Motor neuron (in vitro differentiated cells): ENCODE measurements at regions of chr5 and their contacts with region 1.

Region 1: GRCh38 chr5:112276983-112277382 is 142.1 kb downstream of the EPB41L4A start:
- ATAC-seq: peak in 5 of 8 experiments; percentile 54 to 79 (median 69)
- H3K4me3 ChIP-seq: no peak overlapping the region
- H3K27ac ChIP-seq: no peak overlapping the region
- H3K4me1 ChIP-seq: peaks cover 7 to 10% of the 10 kb centered on the region in 2 donors

Region 2: GRCh38 chr5:112004867-112005622 is 271.9 kb before region 1 on chr5:
- in situ Hi-C with region 1: no loop called
- ATAC-seq: peak in 3 of 8 experiments; percentile 60 to 90 (median 89)
- H3K4me3 ChIP-seq: no peak overlapping the region
- H3K27ac ChIP-seq: no peak overlapping the region
- H3K4me1 ChIP-seq: no peaks in the 10 kb centered on the region

Region 3: GRCh38 chr5:112239996-112240395 is 37.0 kb before region 1 on chr5:
- in situ Hi-C with region 1: no loop called
- ATAC-seq: peak in 4 of 8 experiments; percentile 35 to 100 (median 86)
- H3K4me3 ChIP-seq: no peak overlapping the region
- H3K27ac ChIP-seq: no peak overlapping the region
- H3K4me1 ChIP-seq: peaks cover 0 to 6% of the 10 kb centered on the region in 2 donors

Region 4: DNA sequence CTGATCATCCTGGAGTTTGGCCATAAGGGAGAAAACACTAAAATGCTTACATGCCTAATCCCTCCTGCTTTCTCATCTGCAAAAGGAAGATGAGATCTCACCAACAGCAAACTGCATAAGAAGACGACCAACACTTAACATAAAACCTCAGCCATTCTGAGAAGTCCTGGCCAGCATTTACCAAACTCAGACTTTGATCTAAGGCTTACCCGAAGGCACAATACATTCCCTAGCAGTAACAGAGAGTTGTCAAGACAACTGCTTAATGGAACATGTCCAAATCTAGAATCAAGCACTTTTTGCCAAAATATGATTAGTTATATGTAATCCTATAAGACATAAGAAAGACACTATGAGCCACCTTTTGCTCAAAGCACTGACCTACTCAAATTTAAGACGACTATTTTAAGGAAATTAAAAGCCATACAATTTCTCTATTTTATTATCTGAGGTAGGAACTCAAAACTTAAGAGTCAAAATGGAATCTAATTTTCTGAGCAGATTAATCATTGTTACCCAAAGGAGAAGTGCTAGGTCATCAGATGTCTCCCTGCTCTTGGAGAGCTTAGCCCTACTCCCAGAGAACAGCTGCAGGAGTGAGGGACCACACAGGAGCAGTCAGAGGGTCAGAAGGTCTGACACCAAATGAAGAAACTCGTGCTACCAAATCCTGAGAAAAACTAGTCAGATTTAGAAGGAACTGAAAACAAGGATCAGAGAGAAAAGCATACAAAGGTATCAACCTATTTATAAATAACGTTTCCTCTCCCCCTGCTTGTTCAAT is 102.8 kb after region 1 on chr5:
- in situ Hi-C with region 1: loop called in 1 of 9 experiments (anchors 25 kb)
- ATAC-seq: peak in 2 of 8 experiments; percentile 47 to 50
- H3K4me3 ChIP-seq: no peak overlapping the region
- H3K27ac ChIP-seq: no peak overlapping the region
- H3K4me1 ChIP-seq: peaks cover 0 to 5% of the 10 kb centered on the region in 2 donors

Region 5: DNA sequence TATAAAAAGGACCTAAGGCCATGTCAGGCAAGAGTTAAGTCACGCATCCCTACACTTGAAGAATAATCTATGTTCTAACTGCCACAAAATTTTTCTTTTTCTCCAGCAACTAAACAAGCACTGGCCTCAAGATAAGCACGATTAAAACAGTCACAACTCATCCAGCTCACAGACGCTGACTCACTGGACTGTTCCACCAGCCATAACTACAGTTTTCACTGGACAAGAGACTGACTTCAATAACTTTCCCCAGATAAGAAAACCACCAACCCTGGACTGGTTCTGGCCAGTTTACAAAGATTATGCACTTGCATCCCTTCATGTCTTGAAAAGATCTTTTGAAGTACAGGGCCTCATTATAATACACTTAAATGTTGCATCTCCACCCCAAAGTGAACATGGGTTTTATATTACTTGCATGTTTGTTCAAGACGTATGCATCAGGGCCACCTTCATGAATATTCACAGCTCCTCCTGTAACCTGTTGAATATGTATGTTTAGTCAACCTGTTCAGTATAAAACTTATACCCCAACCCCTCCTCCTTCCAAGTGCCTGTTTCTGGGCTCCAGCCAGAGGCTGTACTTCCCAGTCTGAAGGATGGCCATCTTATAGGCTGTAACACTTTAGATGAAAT is 271.4 kb after region 1 on chr5:
- in situ Hi-C with region 1: no loop called
- ATAC-seq: peak; percentile 67 to 94 (median 80)
- H3K4me3 ChIP-seq: no peak overlapping the region
- H3K27ac ChIP-seq: no peak overlapping the region
- H3K4me1 ChIP-seq: peaks cover 5 to 6% of the 10 kb centered on the region in 2 donors